Natural killer cell (primary cell): ENCODE measurements at regions of chr7 and their contacts with region 1.

Region 1: GRCh38 chr7:100101016-100101862 is at the starts of genes AP4M1 and MCM7:
- DNase-seq: peak; percentile 97
- ATAC-seq: peak; percentile 79 to 93 (median 81)
- H3K4me3 ChIP-seq: peak within 1 kb of the TSS; percentile 98
- H3K4me3 Mint-ChIP-seq: peak within 1 kb of the TSS; percentile 95
- H3K27ac ChIP-seq: peak within 1 kb of the TSS; percentile 93
- H3K27ac Mint-ChIP-seq: peak within 1 kb of the TSS; percentile 96 to 98
- H3K4me1 ChIP-seq: peaks cover 28% of the 10 kb centered on the region
- H3K4me1 Mint-ChIP-seq: peaks cover 36 to 43% of the 10 kb centered on the region in 2 donors
- H3K27me3 ChIP-seq: no peaks in the 10 kb centered on the region
- H3K27me3 Mint-ChIP-seq: no peaks in the 10 kb centered on the region
- CTCF ChIP-seq: no peak
- total RNA-seq, gene AP4M1: 8.4 to 12.8 (median 12.7) TPM
- total RNA-seq, gene MCM7: 112 to 214 (median 137) TPM

Region 2: GRCh38 chr7:100119062-100119700 is 17.9 kb after region 1 on chr7 and contains the starts of genes CNPY4 and TAF6:
- intact Hi-C with region 1: loop called (anchors 1 kb)
- DNase-seq: peak; percentile 90 to 98
- ATAC-seq: peak; percentile 80 to 90 (median 86)
- H3K4me3 ChIP-seq: peak within 1 kb of the TSS; percentile 73
- H3K4me3 Mint-ChIP-seq: peak within 1 kb of the TSS; percentile 97
- H3K27ac ChIP-seq: peak within 1 kb of the TSS; percentile 89
- H3K27ac Mint-ChIP-seq: peak within 1 kb of the TSS; percentile 98
- H3K4me1 ChIP-seq: peaks cover 22% of the 10 kb centered on the region
- H3K4me1 Mint-ChIP-seq: peaks cover 23 to 25% of the 10 kb centered on the region in 2 donors
- H3K27me3 ChIP-seq: no peaks in the 10 kb centered on the region
- H3K27me3 Mint-ChIP-seq: no peaks in the 10 kb centered on the region
- CTCF ChIP-seq: no peak
- total RNA-seq, gene CNPY4: 19.1 to 25.8 (median 23.9) TPM
- total RNA-seq, gene TAF6: 42.2 to 56.8 (median 47.9) TPM

Region 3: DNA sequence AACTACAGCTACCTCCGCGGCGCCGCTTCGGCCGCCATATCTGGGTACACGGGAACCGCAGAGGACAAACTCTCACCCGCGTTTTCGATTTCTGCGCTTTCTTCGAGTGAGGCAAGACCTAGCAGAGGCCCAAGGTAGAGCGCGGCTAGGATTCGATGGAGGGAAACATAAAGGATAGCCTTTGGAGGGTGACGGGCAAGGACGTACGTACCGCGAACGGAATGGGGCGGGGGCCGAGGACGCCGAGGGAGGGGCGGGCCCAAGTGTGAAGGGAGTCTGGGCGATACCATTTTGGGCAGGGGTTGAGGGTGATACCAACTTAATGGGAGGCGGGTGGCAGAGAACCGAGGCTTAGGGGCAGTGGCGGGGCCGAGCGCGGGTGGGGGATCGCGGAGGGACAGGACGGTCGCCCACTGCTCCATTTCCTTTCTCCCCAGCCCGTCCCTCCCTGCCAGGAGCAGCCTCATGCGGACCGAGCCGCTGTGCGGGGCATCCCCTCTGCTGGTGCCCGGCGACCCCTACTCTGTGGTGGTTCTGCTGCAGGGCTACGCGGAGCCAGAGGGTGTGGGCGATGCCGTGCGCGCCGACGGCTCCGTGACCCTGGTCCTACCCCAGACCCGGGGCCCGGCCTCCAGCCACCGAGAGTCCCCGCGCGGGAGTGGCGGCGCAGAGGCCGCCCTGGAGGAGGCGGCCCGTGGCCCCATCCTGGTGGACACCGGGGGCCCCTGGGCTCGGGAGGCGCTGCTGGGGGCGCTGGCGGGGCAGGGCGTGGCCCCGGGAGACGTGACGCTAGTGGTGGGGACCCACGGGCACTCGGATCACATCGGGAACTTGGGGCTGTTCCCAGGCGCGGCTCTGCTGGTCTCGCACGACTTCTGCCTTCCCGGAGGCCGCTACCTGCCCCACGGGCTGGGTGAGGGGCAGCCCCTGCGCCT is 26.0 kb after region 1 on chr7 and contains the start of gene MBLAC1:
- intact Hi-C with region 1: loop called (anchors 1 kb)
- DNase-seq: peak; percentile 87 to 97
- ATAC-seq: peak; percentile 89 to 97 (median 89)
- H3K4me3 ChIP-seq: peak within 1 kb of the TSS; percentile 88
- H3K4me3 Mint-ChIP-seq: peak within 1 kb of the TSS; percentile 98
- H3K27ac ChIP-seq: peak within 1 kb of the TSS; percentile 96
- H3K27ac Mint-ChIP-seq: peak within 1 kb of the TSS; percentile 98 to 99
- H3K4me1 ChIP-seq: peaks cover 34% of the 10 kb centered on the region
- H3K4me1 Mint-ChIP-seq: peaks cover 30 to 38% of the 10 kb centered on the region in 2 donors
- H3K27me3 ChIP-seq: no peaks in the 10 kb centered on the region
- H3K27me3 Mint-ChIP-seq: no peaks in the 10 kb centered on the region
- CTCF ChIP-seq: no peak
- total RNA-seq, gene MBLAC1: 2.8 to 4.3 (median 4.1) TPM